ENCODE measurements at regions of chr11 and their contacts with region 1.

Region 1: DNA sequence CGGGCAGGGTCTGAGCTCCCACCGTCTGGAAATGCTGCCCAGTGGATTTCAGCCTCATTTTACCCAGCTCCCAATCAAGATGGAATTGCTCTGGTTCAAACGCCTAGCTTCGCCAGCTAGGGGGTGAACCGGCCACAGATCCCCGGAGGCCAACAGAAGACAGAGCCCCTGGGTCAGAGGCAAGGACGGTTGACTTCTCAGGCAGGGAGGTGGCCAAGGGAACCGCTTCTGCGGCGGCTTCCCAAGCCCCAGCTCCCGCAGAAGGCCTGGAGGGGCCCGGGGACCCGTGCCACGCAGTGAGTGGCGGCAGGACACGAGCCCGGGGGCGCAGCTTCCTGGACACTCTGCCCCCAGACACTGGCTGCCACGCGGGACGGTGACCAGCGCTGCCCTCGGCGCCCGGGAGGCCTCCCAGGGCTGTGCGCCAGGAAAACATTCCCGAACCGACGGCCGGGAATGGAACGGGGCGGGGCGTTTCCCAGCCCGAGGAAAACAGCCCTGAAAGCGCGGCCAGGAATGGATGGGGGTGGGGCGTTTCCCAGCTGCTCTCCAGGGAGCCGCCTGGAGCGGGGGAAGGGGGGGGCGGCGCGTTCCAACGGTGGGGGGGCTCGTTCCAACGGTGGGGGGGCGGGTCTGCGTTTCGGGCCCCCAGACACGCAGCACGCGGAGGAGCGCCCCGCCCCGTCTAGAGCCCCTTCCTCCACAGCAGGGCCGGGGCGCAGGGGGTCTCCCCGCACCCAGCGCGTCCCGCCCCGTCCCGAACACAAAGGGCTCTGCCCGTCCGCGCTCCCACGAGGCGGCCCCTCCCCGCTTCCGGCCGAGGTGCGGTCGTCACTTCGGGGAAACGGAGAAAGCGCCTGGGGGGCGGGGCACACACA is 13.5 kb upstream of the B4GALNT4 start:
- DNase-seq: peak; percentile 95
- H3K4me3 ChIP-seq: peak overlapping the region; percentile 24
- H3K27ac ChIP-seq: peak overlapping the region; percentile 87
- H3K4me1 ChIP-seq: peaks cover 6% of the 10 kb centered on the region
- H3K27me3 ChIP-seq: no peaks in the 10 kb centered on the region
- CTCF ChIP-seq: no peak

Region 2: DNA sequence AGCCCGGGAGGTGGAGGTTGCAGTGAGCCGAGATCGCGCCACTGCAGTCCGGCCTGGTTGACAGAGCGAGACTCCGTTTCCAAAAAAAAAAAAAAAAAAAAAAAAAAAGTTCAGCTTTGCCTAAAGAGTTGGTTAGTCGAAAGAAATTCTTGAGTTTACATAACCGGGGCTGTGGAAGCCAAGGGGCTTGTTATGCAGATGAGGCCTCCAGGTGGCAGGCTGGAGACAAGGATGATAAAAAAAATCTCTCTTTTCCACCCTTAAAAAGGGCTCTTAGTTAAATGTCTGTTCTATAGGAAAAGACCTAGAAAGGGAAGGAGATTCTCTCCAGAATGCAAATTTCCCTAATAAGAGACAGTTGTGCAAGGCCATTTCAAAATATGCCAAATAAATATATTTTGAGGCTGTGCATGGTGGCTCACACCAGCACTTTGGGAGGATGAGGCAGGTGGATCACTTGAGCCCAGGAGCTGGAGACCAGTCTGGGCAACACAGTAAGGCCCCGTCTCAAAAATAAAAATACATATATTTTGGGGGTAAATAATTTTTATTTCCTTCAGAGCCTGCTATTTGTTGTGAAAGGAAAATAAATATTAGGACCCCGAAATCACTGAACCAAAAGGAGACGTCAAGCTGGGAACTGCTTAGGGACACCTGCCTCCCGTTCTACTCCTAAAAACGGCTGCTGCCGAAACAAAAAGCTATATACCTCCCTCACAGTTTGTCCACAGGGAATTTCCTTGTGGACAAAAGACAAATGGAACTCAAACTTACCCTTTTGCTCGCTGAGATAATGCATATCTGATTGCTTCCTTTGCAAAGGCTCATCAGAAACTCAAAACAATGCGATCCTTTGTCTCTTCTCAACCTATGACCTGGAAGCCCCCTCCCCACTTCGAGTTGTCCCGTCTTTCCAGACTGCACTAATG is 50.6 kb before region 1 on chr11:
- intact Hi-C with region 1: loop called (anchors 5 kb)
- DNase-seq: peak; percentile 67
- H3K4me3 ChIP-seq: no peak overlapping the region
- H3K27ac ChIP-seq: no peak overlapping the region
- H3K4me1 ChIP-seq: no peaks in the 10 kb centered on the region
- H3K27me3 ChIP-seq: no peaks in the 10 kb centered on the region
- CTCF ChIP-seq: peak; percentile 68

Region 3: DNA sequence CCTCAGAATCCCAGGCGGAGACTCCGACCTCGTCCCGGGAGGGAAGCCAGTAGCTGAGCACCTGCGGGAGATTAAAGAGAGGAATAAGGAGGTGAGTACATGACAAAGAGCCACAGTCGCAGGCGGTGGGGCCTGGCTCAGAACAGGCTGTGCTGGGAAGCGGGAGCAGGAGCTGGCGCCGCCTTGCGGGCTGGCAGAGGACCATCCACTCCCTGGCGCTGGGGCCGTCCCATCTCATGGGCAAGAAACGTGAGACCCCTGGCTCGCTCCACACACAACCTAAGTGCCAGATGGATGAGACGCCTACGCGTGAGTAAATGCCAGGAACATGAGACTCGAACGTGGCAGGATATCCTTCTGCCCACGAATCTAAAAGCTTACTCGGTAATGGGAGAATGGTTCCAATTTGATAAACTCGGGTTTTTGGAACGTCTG is 427.8 kb after region 1 on chr11:
- intact Hi-C with region 1: no loop called
- DNase-seq: peak; percentile 83
- H3K4me3 ChIP-seq: no peak overlapping the region
- H3K27ac ChIP-seq: no peak overlapping the region
- H3K4me1 ChIP-seq: no peaks in the 10 kb centered on the region
- H3K27me3 ChIP-seq: no peaks in the 10 kb centered on the region
- CTCF ChIP-seq: peak; percentile 66